Activated CD8-positive, alpha-beta T cell treated with anti-CD3 and anti-CD28 coated beads for 36 hours (primary cell): ENCODE measurements at regions of chr14 and their contacts with region 1.

Region 1: GRCh38 chr14:57182760-57183503 is 85.8 kb downstream of the EXOC5 start:
- DNase-seq: no peak
- ATAC-seq: no peak
- H3K4me3 Mint-ChIP-seq: no peak overlapping the region
- H3K27ac Mint-ChIP-seq: no peak overlapping the region
- H3K4me1 Mint-ChIP-seq: no peaks in the 10 kb centered on the region
- H3K27me3 Mint-ChIP-seq: peaks cover 15% of the 10 kb centered on the region
- CTCF ChIP-seq: no peak

Region 2: DNA sequence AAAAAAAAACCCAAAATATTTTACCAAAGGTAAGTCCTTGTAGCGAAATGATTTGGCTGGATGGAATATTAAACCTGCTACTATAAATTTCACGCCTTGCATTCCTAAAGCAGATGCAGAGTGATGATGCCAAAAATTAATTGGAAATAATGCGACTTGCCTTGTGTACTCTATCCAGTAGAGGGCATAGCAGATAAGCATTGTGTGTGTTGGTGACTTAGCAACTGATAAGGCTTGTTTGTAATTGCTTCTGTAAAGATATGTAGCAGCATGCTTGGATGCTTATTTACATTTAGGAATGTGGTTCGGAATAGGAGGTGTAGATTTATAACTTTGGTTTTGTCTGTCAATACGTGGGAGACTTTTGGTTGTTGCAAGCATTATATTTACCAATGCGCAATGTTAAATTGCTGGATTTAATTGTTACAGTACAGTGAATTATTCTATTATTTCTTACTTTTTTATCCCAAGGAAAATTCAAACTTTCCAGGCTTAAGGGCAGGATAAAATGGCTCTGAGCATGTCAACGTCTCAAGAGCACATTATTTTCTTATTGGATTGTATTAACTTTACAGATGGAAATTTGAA is 522.9 kb before region 1 on chr14:
- CTCF ChIA-PET with region 1: interaction called, 5 read pairs
- POLR2A ChIA-PET with region 1: no interaction called
- intact Hi-C with region 1: loop called (anchors 10 kb)
- DNase-seq: no peak
- ATAC-seq: no peak
- H3K4me3 Mint-ChIP-seq: no peak overlapping the region
- H3K27ac Mint-ChIP-seq: no peak overlapping the region
- H3K4me1 Mint-ChIP-seq: no peaks in the 10 kb centered on the region
- H3K27me3 Mint-ChIP-seq: no peaks in the 10 kb centered on the region
- CTCF ChIP-seq: peak; percentile 41

Region 3: DNA sequence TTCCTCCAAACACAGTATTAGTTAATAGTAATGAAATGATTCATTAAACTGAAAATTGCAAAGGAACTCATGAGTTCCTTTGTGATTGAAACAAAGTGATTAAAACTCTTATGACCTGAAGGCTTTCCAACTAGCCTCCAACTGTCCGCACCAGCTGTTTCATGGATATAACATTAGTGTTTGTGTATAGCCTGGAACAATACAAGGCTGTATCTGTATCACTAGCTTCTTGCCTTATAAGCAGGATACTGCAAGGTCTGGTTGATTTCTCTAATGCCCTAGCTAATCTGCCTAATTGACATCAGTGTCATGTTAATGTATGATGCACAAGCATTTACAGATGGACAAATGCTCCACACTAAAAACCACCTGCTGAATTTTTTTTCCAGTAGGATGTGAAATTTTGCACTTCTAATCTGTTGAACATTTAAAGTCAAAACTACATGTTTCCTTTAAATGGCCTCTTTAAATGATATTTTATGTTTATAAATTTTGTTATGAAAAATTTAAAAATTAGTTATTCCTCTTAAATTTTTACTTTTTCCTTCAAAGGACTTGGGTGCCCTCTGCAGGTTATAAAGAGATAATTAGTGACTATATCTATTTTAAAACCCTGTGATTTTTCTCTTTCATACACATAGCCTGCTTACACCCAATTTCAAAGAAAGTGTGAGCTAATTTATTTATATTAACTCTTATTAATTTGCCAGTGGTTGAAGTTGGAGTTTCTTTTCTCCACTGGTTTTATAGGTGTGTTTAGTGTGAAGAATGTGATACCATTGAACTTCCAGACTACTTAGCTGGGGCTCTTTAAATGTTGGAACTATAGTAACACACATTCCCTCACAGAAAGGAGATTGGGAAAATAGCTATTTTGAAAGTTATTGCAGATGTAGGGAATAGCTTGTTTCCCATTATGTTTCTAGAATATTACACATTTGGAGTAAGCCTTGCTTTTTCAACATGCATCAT is 111.2 kb after region 1 on chr14:
- CTCF ChIA-PET with region 1: no interaction called
- POLR2A ChIA-PET with region 1: no interaction called
- intact Hi-C with region 1: no loop called
- DNase-seq: no peak
- ATAC-seq: no peak
- H3K4me3 Mint-ChIP-seq: no peak overlapping the region
- H3K27ac Mint-ChIP-seq: no peak overlapping the region
- H3K4me1 Mint-ChIP-seq: no peaks in the 10 kb centered on the region
- H3K27me3 Mint-ChIP-seq: no peaks in the 10 kb centered on the region
- CTCF ChIP-seq: peak; percentile 59